Panc1 (cell line): ENCODE measurements at regions of chr7 and their contacts with region 1.

Region 1: DNA sequence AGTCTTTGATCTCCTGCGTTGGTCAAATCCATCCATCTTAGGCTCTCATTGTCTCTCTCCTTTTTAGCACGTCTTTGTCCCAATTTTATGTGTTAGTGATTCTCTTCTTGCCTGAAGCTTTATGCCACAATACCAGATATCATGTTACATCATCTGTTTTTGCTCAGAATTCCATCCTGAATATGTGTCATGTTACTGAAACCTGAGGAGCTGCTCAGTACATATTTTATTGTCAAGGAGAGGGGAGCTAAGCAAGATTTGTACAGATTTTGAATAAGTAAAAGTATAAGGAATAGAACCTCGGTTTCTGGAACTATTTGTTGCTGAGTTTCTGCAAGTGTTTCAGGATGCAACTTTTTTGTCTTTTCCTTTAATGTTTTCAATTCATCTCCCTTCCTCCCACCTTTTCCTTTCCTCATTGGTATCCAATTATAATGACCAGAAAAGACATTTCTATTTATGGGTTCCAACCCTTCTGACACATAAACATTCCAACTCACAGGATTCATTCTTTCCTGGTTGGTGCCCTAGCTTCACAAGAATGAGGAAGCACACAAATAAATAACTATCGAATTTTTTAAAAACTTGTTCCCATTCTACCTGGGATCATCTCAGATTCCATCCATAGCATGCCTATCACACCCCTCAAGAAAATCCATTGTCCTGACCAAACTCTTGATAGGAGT is 291.8 kb downstream of the CRPPA start:
- DNase-seq: no peak
- ATAC-seq: no peak
- H3K4me3 ChIP-seq: no peak overlapping the region
- H3K27ac ChIP-seq: no peak overlapping the region
- H3K4me1 ChIP-seq: no peaks in the 10 kb centered on the region
- H3K27me3 ChIP-seq: no peaks in the 10 kb centered on the region
- CTCF ChIP-seq: no peak

Region 2: GRCh38 chr7:16114633-16115032 is 14.9 kb before region 1 on chr7:
- CTCF ChIA-PET with region 1: no interaction called
- POLR2A ChIA-PET with region 1: no interaction called
- in situ Hi-C with region 1: no loop called
- intact Hi-C with region 1: loop called (anchors 2 kb)
- DNase-seq: peak; percentile 17
- ATAC-seq: no peak
- H3K4me3 ChIP-seq: no peak overlapping the region
- H3K27ac ChIP-seq: no peak overlapping the region
- H3K4me1 ChIP-seq: no peaks in the 10 kb centered on the region
- H3K27me3 ChIP-seq: no peaks in the 10 kb centered on the region
- CTCF ChIP-seq: peak; percentile 48; the same call in 1 of the 2 replicates

Region 3: DNA sequence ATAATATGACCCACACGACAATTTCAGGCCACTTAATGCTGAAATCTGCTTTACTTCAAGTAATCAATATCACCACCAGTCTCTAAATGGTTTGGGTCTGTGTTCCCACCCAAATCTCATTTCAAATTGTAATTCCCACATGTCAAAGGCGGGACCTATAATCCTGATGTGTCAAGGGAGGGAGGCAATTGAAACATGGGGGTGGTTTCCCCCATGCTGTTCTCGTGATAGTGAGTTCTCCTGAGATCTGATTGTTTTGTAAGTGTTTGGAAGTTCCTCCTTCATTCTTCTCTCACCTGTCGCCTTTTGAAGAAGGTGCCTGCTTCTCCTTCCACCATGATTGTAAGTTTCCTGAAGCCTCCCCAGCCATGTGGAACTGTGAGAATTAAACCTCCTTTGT is 113.3 kb after region 1 on chr7:
- CTCF ChIA-PET with region 1: no interaction called
- POLR2A ChIA-PET with region 1: no interaction called
- in situ Hi-C with region 1: no loop called
- intact Hi-C with region 1: no loop called
- DNase-seq: no peak
- ATAC-seq: no peak
- H3K4me3 ChIP-seq: no peak overlapping the region
- H3K27ac ChIP-seq: no peak overlapping the region
- H3K4me1 ChIP-seq: no peaks in the 10 kb centered on the region
- H3K27me3 ChIP-seq: no peaks in the 10 kb centered on the region
- CTCF ChIP-seq: no peak